ENCODE measurements at regions of chr15 and their contacts with region 1.

Region 1: GRCh38 chr15:99578809-99579208 is 13.0 kb downstream of the MEF2A start:
- DNase-seq: no peak
- ATAC-seq: no peak
- H3K4me3 ChIP-seq: no peak overlapping the region
- H3K27ac ChIP-seq: no peak overlapping the region
- H3K4me1 ChIP-seq: peaks cover 5% of the 10 kb centered on the region
- H3K27me3 ChIP-seq: no peaks in the 10 kb centered on the region
- CTCF ChIP-seq: no peak
- POLR2A ChIP-seq: no peak
- RAD21 ChIP-seq: no peak

Region 2: GRCh38 chr15:99613887-99614647 is 35.3 kb after region 1 on chr15:
- CTCF ChIA-PET with region 1: no interaction called
- POLR2A ChIA-PET with region 1: no interaction called
- dilution Hi-C with region 1: no loop called
- in situ Hi-C with region 1: no loop called
- intact Hi-C with region 1: no loop called
- DNase-seq: peak; percentile 62
- ATAC-seq: peak; percentile 54; the same call in 1 of the 2 replicates
- H3K4me3 ChIP-seq: no peak overlapping the region
- H3K27ac ChIP-seq: no peak overlapping the region
- H3K4me1 ChIP-seq: peaks cover 6% of the 10 kb centered on the region
- H3K27me3 ChIP-seq: no peaks in the 10 kb centered on the region
- CTCF ChIP-seq: no peak
- POLR2A ChIP-seq: no peak
- RAD21 ChIP-seq: no peak

Region 3: GRCh38 chr15:99631255-99631654 is 52.4 kb after region 1 on chr15:
- CTCF ChIA-PET with region 1: no interaction called
- POLR2A ChIA-PET with region 1: no interaction called
- dilution Hi-C with region 1: no loop called
- in situ Hi-C with region 1: no loop called
- intact Hi-C with region 1: loop called (anchors 10 kb)
- DNase-seq: no peak
- ATAC-seq: no peak; the same call in 1 of the 2 replicates
- H3K4me3 ChIP-seq: no peak overlapping the region
- H3K27ac ChIP-seq: no peak overlapping the region
- H3K4me1 ChIP-seq: peaks cover 3% of the 10 kb centered on the region; the same call in 1 of the 2 replicates
- H3K27me3 ChIP-seq: no peaks in the 10 kb centered on the region
- CTCF ChIP-seq: no peak
- POLR2A ChIP-seq: no peak
- RAD21 ChIP-seq: no peak

Region 4: GRCh38 chr15:99895189-99895955 is 316.6 kb after region 1 on chr15:
- CTCF ChIA-PET with region 1: no interaction called
- POLR2A ChIA-PET with region 1: no interaction called
- dilution Hi-C with region 1: no loop called
- in situ Hi-C with region 1: no loop called
- intact Hi-C with region 1: no loop called
- DNase-seq: no peak
- ATAC-seq: no peak
- H3K4me3 ChIP-seq: no peak overlapping the region
- H3K27ac ChIP-seq: no peak overlapping the region
- H3K4me1 ChIP-seq: no peaks in the 10 kb centered on the region
- H3K27me3 ChIP-seq: no peaks in the 10 kb centered on the region
- CTCF ChIP-seq: no peak
- POLR2A ChIP-seq: no peak
- RAD21 ChIP-seq: no peak